IMR-90 (cell line): ENCODE measurements at regions of chr15 and their contacts with region 1.

Region 1: GRCh38 chr15:29870495-29871151 is 48.4 kb upstream of the TJP1 start:
- DNase-seq: no peak
- ATAC-seq: no peak
- H3K4me3 ChIP-seq: no peak overlapping the region
- H3K27ac ChIP-seq: no peak overlapping the region
- H3K4me1 ChIP-seq: no peaks in the 10 kb centered on the region
- H3K27me3 ChIP-seq: no peaks in the 10 kb centered on the region; the same call in 1 of the 2 replicates
- CTCF ChIP-seq: no peak
- POLR2A ChIP-seq: no peak
- RAD21 ChIP-seq: no peak

Region 2: GRCh38 chr15:28975766-28976179 is 894.9 kb before region 1 on chr15:
- CTCF ChIA-PET with region 1: no interaction called
- POLR2A ChIA-PET with region 1: no interaction called
- dilution Hi-C with region 1: no loop called
- in situ Hi-C with region 1: no loop called
- intact Hi-C with region 1: no loop called
- DNase-seq: peak; percentile 55
- ATAC-seq: no peak
- H3K4me3 ChIP-seq: no peak overlapping the region
- H3K27ac ChIP-seq: no peak overlapping the region
- H3K4me1 ChIP-seq: peaks cover 4% of the 10 kb centered on the region; the same call in 1 of the 2 replicates
- H3K27me3 ChIP-seq: no peaks in the 10 kb centered on the region
- CTCF ChIP-seq: peak; percentile 72
- POLR2A ChIP-seq: no peak
- RAD21 ChIP-seq: peak; percentile 72

Region 3: DNA sequence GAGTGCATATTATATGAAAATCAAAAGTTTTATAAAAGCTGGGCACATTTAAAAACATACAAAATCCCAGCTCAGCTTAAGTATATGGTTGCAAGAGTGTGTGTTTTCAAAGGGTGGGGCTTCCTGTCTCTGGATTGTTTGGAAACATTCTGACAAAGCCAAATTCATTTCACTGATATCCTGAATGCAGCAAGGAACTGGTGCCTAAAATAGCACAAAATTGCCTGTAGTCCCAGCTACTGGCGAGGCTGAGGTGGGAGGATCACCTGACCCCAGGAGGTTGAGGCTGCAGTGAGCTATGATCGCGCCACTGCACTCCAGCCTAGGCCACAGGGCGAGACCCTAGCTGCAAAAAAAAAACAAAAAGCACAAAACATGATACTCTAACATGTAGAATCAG is 35.3 kb before region 1 on chr15:
- CTCF ChIA-PET with region 1: no interaction called
- POLR2A ChIA-PET with region 1: no interaction called
- dilution Hi-C with region 1: no loop called
- in situ Hi-C with region 1: no loop called
- intact Hi-C with region 1: no loop called
- DNase-seq: peak; percentile 33
- ATAC-seq: peak; percentile 42
- H3K4me3 ChIP-seq: no peak overlapping the region
- H3K27ac ChIP-seq: no peak overlapping the region
- H3K4me1 ChIP-seq: peaks cover 2% of the 10 kb centered on the region; the same call in 1 of the 2 replicates
- H3K27me3 ChIP-seq: no peaks in the 10 kb centered on the region
- CTCF ChIP-seq: no peak
- POLR2A ChIP-seq: no peak
- RAD21 ChIP-seq: no peak

Region 4: GRCh38 chr15:29883126-29883525 is 12.5 kb after region 1 on chr15:
- CTCF ChIA-PET with region 1: interaction called, 3 read pairs
- POLR2A ChIA-PET with region 1: no interaction called
- dilution Hi-C with region 1: no loop called
- in situ Hi-C with region 1: no loop called
- intact Hi-C with region 1: loop called (anchors 2 kb)
- DNase-seq: peak; percentile 29
- ATAC-seq: peak; percentile 84
- H3K4me3 ChIP-seq: no peak overlapping the region
- H3K27ac ChIP-seq: peak overlapping the region; percentile 26; the same call in 1 of the 2 replicates
- H3K4me1 ChIP-seq: peaks cover 15% of the 10 kb centered on the region
- H3K27me3 ChIP-seq: no peaks in the 10 kb centered on the region
- CTCF ChIP-seq: no peak
- POLR2A ChIP-seq: no peak
- RAD21 ChIP-seq: no peak